ENCODE measurements at regions of chr7 and their contacts with region 1.

Region 1: GRCh38 chr7:7103343-7104313 is 78.7 kb upstream of the C1GALT1 start:
- DNase-seq: no peak
- H3K4me3 Mint-ChIP-seq: no peak overlapping the region
- H3K27ac Mint-ChIP-seq: no peak overlapping the region
- H3K4me1 Mint-ChIP-seq: peaks cover 27% of the 10 kb centered on the region
- H3K27me3 Mint-ChIP-seq: peaks cover 1% of the 10 kb centered on the region

Region 2: GRCh38 chr7:7182156-7183060 is 78.8 kb after region 1 on chr7 and contains the start of gene C1GALT1:
- CTCF ChIA-PET with region 1: interaction called, 14 read pairs
- DNase-seq: peak; percentile 98
- H3K4me3 Mint-ChIP-seq: peak within 1 kb of the TSS; percentile 88
- H3K27ac Mint-ChIP-seq: peak within 1 kb of the TSS; percentile 100
- H3K4me1 Mint-ChIP-seq: peaks cover 28% of the 10 kb centered on the region
- H3K27me3 Mint-ChIP-seq: no peaks in the 10 kb centered on the region

Region 3: GRCh38 chr7:7536396-7537019 is 432.9 kb after region 1 on chr7:
- CTCF ChIA-PET with region 1: interaction called, 27 read pairs
- DNase-seq: no peak
- H3K4me3 Mint-ChIP-seq: no peak overlapping the region
- H3K27ac Mint-ChIP-seq: no peak overlapping the region
- H3K4me1 Mint-ChIP-seq: no peaks in the 10 kb centered on the region
- H3K27me3 Mint-ChIP-seq: peaks cover 2% of the 10 kb centered on the region

Region 4: GRCh38 chr7:7542251-7542835 is 438.7 kb after region 1 on chr7:
- CTCF ChIA-PET with region 1: interaction called, 27 read pairs
- DNase-seq: no peak
- H3K4me3 Mint-ChIP-seq: no peak overlapping the region
- H3K27ac Mint-ChIP-seq: no peak overlapping the region
- H3K4me1 Mint-ChIP-seq: no peaks in the 10 kb centered on the region
- H3K27me3 Mint-ChIP-seq: no peaks in the 10 kb centered on the region